Mammary epithelial cell (primary cell): ENCODE measurements at regions of chr3 and their contacts with region 1.

Region 1: DNA sequence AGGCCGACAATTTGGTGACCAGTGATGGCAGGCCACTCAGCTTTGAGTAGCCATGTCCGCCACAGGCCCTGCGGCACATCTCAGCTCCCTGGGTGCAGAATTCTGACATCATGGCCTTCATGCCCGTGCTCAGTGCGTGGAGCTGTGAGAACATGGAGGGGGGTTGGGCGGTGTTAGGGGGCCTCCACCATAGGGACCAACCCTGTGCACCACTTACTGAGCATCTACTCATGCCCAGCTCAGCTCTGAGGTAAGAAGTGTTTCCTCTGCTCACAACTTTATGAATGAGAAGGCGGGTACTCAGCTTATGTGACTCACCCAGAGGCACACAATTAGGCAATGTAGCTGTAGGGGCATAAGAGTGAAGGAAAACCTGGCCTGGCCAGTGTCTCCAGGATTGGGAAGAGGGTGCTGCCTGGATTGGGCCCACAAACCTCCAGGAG is 10.5 kb downstream of the ACOX2 start:
- DNase-seq: peak; percentile 92
- H3K4me3 ChIP-seq: no peak overlapping the region
- H3K27ac ChIP-seq: no peak overlapping the region
- H3K4me1 ChIP-seq: peaks cover 26% of the 10 kb centered on the region
- H3K27me3 ChIP-seq: no peaks in the 10 kb centered on the region
- CTCF ChIP-seq: no peak

Region 2: GRCh38 chr3:58463181-58463941 is 63.2 kb before region 1 on chr3:
- CTCF ChIA-PET with region 1: no interaction called
- dilution Hi-C with region 1: no loop called
- in situ Hi-C with region 1: no loop called
- intact Hi-C with region 1: loop called (anchors 1 kb)
- DNase-seq: peak; percentile 90
- H3K4me3 ChIP-seq: no peak overlapping the region
- H3K27ac ChIP-seq: no peak overlapping the region
- H3K4me1 ChIP-seq: peaks cover 17% of the 10 kb centered on the region
- H3K27me3 ChIP-seq: peaks cover 4% of the 10 kb centered on the region
- CTCF ChIP-seq: peak; percentile 91 to 96

Region 3: GRCh38 chr3:58640700-58641372 is 114.3 kb after region 1 on chr3:
- CTCF ChIA-PET with region 1: no interaction called
- dilution Hi-C with region 1: no loop called
- in situ Hi-C with region 1: no loop called
- intact Hi-C with region 1: no loop called
- DNase-seq: peak; percentile 64
- H3K4me3 ChIP-seq: no peak overlapping the region
- H3K27ac ChIP-seq: no peak overlapping the region
- H3K4me1 ChIP-seq: peaks cover 10% of the 10 kb centered on the region
- H3K27me3 ChIP-seq: no peaks in the 10 kb centered on the region
- CTCF ChIP-seq: peak; percentile 75 to 96